Naive thymus-derived CD4-positive, alpha-beta T cell (primary cell): ENCODE measurements at regions of chrX and their contacts with region 1.

Region 1: DNA sequence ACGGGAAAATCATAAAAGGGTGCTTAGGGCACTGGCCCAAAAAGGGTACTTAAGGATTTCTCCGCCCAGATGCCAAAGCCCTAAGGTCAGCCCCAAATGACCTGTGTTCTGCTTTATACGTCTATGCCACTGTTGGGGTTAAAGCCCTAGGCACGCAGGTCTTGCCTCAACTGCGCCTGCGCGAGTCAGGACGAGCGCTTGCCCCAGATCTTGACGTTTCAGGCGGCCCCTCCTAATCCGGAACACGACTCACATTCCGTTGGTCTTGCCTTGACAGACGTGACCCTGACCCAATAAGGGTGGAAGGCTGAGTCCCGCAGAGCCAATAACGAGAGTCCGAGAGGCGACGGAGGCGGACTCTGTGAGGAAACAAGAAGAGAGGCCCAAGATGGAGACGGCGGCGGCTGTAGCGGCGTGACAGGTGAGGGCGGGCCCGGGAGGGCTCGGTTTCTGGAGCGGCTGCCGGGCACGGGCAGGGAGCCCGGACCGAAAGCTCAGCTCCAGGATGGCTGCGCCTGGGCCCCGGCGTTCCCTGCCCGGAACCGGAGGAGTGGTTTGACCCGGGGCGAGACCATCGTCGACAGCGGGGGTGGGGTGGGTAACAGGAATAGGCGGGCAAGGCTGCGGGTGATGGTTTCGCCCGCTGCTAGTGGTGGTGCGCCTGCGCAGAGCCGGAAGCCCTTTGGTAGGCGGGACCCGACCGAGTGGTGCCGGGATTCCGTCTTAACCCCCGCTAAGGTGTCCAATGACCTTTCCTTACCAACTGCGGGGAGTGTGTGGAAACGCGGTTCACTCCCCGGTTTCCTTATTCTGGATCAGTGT is at the start of gene ARAF:
- DNase-seq: peak; percentile 78 to 98 (median 96)
- ATAC-seq: peak; percentile 92
- H3K4me3 ChIP-seq: peak within 1 kb of the TSS; percentile 92
- H3K4me3 Mint-ChIP-seq: peak within 1 kb of the TSS; percentile 85 to 98 (median 92)
- H3K27ac ChIP-seq: peak within 1 kb of the TSS; percentile 92
- H3K27ac Mint-ChIP-seq: peak within 1 kb of the TSS; percentile 96 to 100 (median 97)
- H3K4me1 ChIP-seq: peaks cover 10 to 18% of the 10 kb centered on the region in 2 donors
- H3K4me1 Mint-ChIP-seq: peaks cover 12 to 58% (median 43%) of the 10 kb centered on the region in 7 donors
- H3K27me3 ChIP-seq: no peaks in the 10 kb centered on the region
- H3K27me3 Mint-ChIP-seq: no peaks in the 10 kb centered on the region
- total RNA-seq, gene ARAF: 87.3 to 130 (median 118) TPM

Region 2: DNA sequence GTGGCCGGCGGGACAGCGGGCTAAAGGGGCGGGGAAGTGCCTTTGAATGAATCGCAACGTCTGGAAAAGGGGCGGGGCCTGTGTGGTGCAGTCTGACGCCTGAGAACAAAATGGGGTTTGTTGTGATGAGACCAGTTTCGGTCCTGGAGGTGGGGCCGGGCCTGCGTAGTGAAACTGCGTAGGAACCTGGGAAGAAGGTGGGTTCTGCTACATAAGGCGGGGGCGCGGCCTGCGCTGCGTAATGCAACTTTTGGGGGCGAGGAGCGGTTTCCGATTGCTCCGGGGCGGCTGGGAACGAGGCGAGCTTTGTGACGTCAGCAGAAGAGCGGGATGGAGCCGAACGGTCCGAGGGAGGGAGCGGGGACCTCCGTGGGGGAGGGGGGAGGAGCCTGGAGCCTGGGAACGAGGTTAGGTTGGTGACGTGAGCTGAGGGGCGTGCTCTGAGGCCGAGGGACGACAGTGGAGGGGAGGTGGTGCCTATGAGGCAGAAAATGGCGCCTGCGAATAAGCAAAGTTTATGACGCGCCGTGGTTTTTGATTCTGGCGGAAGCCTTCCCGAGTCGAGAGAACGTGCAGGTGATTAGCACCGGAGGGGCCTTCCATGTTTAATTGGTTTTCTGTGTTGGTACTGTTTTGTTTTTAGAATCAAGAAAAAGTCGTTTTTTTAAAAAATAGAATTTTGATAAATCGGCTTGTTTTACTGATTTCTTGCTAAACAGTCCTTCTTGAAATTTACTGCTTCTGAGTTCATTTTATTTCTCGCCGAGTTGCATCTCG is 327.5 kb before region 1 on chrX:
- CTCF ChIA-PET with region 1: no interaction called
- POLR2A ChIA-PET with region 1: interaction called, 3 read pairs
- intact Hi-C with region 1: loop called (anchors 1 to 2 kb)
- DNase-seq: peak; percentile 71 to 97 (median 94)
- ATAC-seq: peak; percentile 92
- H3K4me3 ChIP-seq: peak overlapping the region; percentile 74
- H3K4me3 Mint-ChIP-seq: peak overlapping the region; percentile 84 to 98 (median 90)
- H3K27ac ChIP-seq: peak overlapping the region; percentile 99
- H3K27ac Mint-ChIP-seq: peak overlapping the region; percentile 94 to 100 (median 98)
- H3K4me1 ChIP-seq: peaks cover 0 to 14% of the 10 kb centered on the region in 2 donors
- H3K4me1 Mint-ChIP-seq: peaks cover 8 to 49% (median 24%) of the 10 kb centered on the region in 7 donors
- H3K27me3 ChIP-seq: no peaks in the 10 kb centered on the region
- H3K27me3 Mint-ChIP-seq: peaks cover 0 to 4% (median 0%) of the 10 kb centered on the region in 5 donors

Region 3: DNA sequence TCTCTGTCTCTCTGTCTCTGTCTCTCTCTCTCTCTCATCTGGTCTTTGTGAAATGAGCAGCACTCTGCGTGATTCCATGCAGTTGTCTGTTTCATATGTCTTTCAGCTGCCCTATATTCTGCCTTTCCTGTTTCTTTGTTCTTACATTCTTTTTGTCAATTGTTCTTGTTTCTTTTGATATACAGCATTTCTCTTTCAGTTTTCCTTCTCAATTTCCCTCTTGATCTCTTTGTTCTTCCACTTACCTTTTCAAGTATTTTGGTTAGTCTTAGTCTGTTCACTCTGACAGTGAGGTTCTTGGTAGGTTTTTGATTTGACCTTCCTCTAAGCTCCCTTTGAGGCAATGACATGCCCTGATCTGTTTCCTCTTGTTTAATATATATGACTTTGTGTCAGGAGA is 170.3 kb before region 1 on chrX:
- CTCF ChIA-PET with region 1: no interaction called
- POLR2A ChIA-PET with region 1: no interaction called
- intact Hi-C with region 1: no loop called
- DNase-seq: peak in 5 of 9 donors; percentile 28 to 57 (median 51)
- ATAC-seq: peak; percentile 75
- H3K4me3 ChIP-seq: no peak overlapping the region
- H3K4me3 Mint-ChIP-seq: peak overlapping the region; percentile 26 to 83 (median 70)
- H3K27ac ChIP-seq: peak overlapping the region; percentile 22
- H3K27ac Mint-ChIP-seq: peak overlapping the region; percentile 41 to 94 (median 78)
- H3K4me1 ChIP-seq: peaks cover 0 to 7% of the 10 kb centered on the region in 2 donors
- H3K4me1 Mint-ChIP-seq: peaks cover 7 to 28% (median 19%) of the 10 kb centered on the region in 7 donors
- H3K27me3 ChIP-seq: no peaks in the 10 kb centered on the region
- H3K27me3 Mint-ChIP-seq: no peaks in the 10 kb centered on the region

Region 4: DNA sequence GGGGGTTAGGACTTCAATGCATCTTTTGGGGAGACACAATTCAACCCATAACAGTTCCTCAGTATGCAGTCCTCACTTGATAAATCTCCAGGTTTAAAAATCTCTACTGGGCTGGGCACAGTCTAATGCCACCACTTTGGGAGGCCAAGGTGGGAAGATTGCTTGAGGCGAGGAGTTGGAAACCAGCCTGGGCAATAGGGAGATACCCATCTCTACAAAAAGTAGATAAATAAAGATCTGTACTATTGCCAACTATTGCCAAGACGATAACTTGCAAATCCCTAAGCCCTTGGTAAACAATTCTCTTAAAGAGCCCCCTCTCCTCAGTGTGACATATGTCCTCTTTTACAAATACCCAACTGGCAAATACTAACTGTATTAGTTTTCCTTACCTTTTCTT is 135.8 kb before region 1 on chrX:
- CTCF ChIA-PET with region 1: no interaction called
- POLR2A ChIA-PET with region 1: no interaction called
- intact Hi-C with region 1: no loop called
- DNase-seq: no peak
- ATAC-seq: no peak
- H3K4me3 ChIP-seq: no peak overlapping the region
- H3K4me3 Mint-ChIP-seq: no peak overlapping the region
- H3K27ac ChIP-seq: no peak overlapping the region
- H3K27ac Mint-ChIP-seq: no peak overlapping the region
- H3K4me1 ChIP-seq: no peaks in the 10 kb centered on the region
- H3K4me1 Mint-ChIP-seq: peaks cover 0 to 2% (median 0%) of the 10 kb centered on the region in 7 donors
- H3K27me3 ChIP-seq: no peaks in the 10 kb centered on the region
- H3K27me3 Mint-ChIP-seq: no peaks in the 10 kb centered on the region

Region 5: DNA sequence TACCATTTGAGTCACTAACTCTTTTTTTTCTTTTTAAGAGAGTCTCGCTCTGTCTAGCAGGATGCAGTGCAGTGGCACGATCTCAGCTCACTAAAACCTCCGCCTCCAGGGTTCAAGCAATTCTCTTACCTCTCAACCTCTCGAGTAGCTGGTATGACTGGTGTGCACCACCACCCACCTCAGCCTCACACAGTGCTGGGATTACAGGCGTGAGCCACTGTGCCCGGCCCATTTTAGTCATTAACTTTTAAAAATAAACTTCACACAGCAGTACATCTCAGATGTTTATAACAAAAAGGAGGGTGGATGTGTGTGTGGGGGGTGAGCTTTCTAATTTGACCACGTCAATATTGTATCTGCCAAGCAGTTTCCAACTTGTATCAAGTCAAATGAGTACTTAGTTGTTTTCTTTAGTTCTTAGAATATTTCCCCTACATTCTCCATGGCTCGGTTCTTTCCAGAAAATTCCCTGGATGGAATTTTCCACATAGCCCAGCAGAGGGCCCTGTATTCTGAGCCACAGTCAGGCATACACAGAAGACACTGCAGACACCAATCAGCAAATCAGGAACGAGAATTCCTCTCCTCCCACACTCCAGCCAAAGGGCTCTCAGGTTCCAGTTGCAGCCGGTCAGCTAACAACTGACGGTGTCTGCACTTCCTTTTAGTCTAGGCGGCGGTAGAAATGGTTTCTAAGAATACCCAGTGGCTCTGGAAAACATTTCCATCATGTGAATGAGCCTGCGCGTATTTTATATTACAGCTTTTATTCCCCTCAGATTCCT is 20.1 kb before region 1 on chrX:
- CTCF ChIA-PET with region 1: no interaction called
- POLR2A ChIA-PET with region 1: no interaction called
- intact Hi-C with region 1: loop called in 1 of 2 experiments (anchors 1 kb)
- DNase-seq: no peak
- ATAC-seq: peak; percentile 61
- H3K4me3 ChIP-seq: no peak overlapping the region
- H3K4me3 Mint-ChIP-seq: no peak overlapping the region
- H3K27ac ChIP-seq: no peak overlapping the region
- H3K27ac Mint-ChIP-seq: no peak overlapping the region
- H3K4me1 ChIP-seq: no peaks in the 10 kb centered on the region
- H3K4me1 Mint-ChIP-seq: peaks cover 0 to 3% (median 0%) of the 10 kb centered on the region in 7 donors
- H3K27me3 ChIP-seq: no peaks in the 10 kb centered on the region
- H3K27me3 Mint-ChIP-seq: no peaks in the 10 kb centered on the region

Region 6: GRCh38 chrX:47628980-47629379 is 67.9 kb after region 1 on chrX:
- CTCF ChIA-PET with region 1: no interaction called
- POLR2A ChIA-PET with region 1: interaction called, 11 read pairs
- intact Hi-C with region 1: loop called in 1 of 2 experiments (anchors 1 kb)
- DNase-seq: peak in 4 of 9 donors; percentile 14 to 35 (median 30)
- ATAC-seq: peak; percentile 33
- H3K4me3 ChIP-seq: peak overlapping the region; percentile 33
- H3K4me3 Mint-ChIP-seq: peak overlapping the region; percentile 83 to 95 (median 90)
- H3K27ac ChIP-seq: peak overlapping the region; percentile 64
- H3K27ac Mint-ChIP-seq: peak overlapping the region; percentile 72 to 95 (median 89)
- H3K4me1 ChIP-seq: peaks cover 0 to 3% of the 10 kb centered on the region in 2 donors
- H3K4me1 Mint-ChIP-seq: peaks cover 0 to 34% (median 28%) of the 10 kb centered on the region in 7 donors
- H3K27me3 ChIP-seq: no peaks in the 10 kb centered on the region
- H3K27me3 Mint-ChIP-seq: peaks cover 0 to 3% (median 0%) of the 10 kb centered on the region in 5 donors

Region 7: DNA sequence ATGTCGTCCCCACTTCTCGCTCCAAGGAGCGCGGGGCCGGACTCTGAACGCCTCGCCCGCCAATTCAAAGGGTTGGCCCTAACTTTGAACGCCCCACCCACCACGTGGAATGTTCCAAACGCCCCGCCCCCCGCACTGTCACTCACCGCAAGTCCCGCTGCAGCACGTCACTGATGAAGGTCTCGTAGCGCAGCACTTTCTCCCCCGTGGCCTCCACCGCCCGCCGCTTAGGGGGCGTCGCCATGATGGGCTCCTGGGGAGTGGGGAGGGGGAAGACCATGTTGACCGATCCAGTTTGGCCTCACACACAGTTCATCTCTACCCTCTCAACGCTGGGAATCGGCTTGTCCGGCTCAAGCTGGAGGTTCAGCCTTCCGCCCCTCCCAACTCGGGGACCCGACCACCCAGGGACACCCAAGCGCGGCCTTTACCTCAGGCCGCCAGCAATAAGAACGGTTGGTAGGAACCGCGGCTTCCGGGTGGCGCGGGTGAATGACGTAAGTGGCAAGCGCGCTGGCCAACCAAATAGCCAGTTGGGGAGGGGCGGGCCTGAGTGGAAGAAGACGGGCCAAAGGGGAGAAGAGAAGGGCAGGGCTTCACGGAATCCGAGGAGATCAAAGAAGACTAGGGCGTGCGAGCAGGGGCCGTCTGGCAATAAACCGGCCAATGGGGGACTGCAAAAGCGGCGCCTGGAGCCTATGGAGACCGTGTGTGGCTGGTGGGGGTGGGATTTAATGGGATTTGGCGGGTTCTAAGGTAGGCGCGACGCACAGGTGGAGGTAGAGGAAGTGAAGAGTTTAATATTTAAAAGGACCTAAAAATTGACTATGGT is 97.9 kb after region 1 on chrX and contains the start of gene UXT:
- CTCF ChIA-PET with region 1: no interaction called
- POLR2A ChIA-PET with region 1: interaction called, 3 read pairs
- intact Hi-C with region 1: loop called (anchors 1 kb)
- DNase-seq: peak; percentile 75 to 92 (median 89)
- ATAC-seq: peak; percentile 91
- H3K4me3 ChIP-seq: peak within 1 kb of the TSS; percentile 86
- H3K4me3 Mint-ChIP-seq: peak within 1 kb of the TSS; percentile 80 to 95 (median 92)
- H3K27ac ChIP-seq: peak within 1 kb of the TSS; percentile 99
- H3K27ac Mint-ChIP-seq: peak within 1 kb of the TSS; percentile 94 to 99 (median 97)
- H3K4me1 ChIP-seq: peaks cover 4 to 8% of the 10 kb centered on the region in 2 donors
- H3K4me1 Mint-ChIP-seq: peaks cover 9 to 34% (median 21%) of the 10 kb centered on the region in 7 donors
- H3K27me3 ChIP-seq: no peaks in the 10 kb centered on the region
- H3K27me3 Mint-ChIP-seq: no peaks in the 10 kb centered on the region
- total RNA-seq, gene UXT: 160 to 235 (median 201) TPM

Region 8: GRCh38 chrX:48021026-48021900 is 460.2 kb after region 1 on chrX:
- CTCF ChIA-PET with region 1: no interaction called
- POLR2A ChIA-PET with region 1: no interaction called
- intact Hi-C with region 1: loop called (anchors 2 to 5 kb)
- DNase-seq: peak; percentile 57 to 90 (median 87)
- ATAC-seq: peak; percentile 77
- H3K4me3 ChIP-seq: peak overlapping the region; percentile 96
- H3K4me3 Mint-ChIP-seq: peak overlapping the region; percentile 91 to 97 (median 94)
- H3K27ac ChIP-seq: peak overlapping the region; percentile 87
- H3K27ac Mint-ChIP-seq: peak overlapping the region; percentile 93 to 99 (median 98)
- H3K4me1 ChIP-seq: no peaks in the 10 kb centered on the region
- H3K4me1 Mint-ChIP-seq: peaks cover 6 to 29% (median 10%) of the 10 kb centered on the region in 7 donors
- H3K27me3 ChIP-seq: no peaks in the 10 kb centered on the region
- H3K27me3 Mint-ChIP-seq: peaks cover 0 to 6% (median 0%) of the 10 kb centered on the region in 5 donors